MCF 10A (cell line): ENCODE measurements at regions of chr4 and their contacts with region 1.

Region 1: GRCh38 chr4:114615436-114615885 is 16.9 kb downstream of the UGT8 start:
- DNase-seq: no peak
- H3K4me3 Mint-ChIP-seq: no peak overlapping the region
- H3K27ac Mint-ChIP-seq: no peak overlapping the region
- H3K4me1 Mint-ChIP-seq: no peaks in the 10 kb centered on the region
- H3K27me3 Mint-ChIP-seq: no peaks in the 10 kb centered on the region
- CTCF ChIP-seq: no peak

Region 2: DNA sequence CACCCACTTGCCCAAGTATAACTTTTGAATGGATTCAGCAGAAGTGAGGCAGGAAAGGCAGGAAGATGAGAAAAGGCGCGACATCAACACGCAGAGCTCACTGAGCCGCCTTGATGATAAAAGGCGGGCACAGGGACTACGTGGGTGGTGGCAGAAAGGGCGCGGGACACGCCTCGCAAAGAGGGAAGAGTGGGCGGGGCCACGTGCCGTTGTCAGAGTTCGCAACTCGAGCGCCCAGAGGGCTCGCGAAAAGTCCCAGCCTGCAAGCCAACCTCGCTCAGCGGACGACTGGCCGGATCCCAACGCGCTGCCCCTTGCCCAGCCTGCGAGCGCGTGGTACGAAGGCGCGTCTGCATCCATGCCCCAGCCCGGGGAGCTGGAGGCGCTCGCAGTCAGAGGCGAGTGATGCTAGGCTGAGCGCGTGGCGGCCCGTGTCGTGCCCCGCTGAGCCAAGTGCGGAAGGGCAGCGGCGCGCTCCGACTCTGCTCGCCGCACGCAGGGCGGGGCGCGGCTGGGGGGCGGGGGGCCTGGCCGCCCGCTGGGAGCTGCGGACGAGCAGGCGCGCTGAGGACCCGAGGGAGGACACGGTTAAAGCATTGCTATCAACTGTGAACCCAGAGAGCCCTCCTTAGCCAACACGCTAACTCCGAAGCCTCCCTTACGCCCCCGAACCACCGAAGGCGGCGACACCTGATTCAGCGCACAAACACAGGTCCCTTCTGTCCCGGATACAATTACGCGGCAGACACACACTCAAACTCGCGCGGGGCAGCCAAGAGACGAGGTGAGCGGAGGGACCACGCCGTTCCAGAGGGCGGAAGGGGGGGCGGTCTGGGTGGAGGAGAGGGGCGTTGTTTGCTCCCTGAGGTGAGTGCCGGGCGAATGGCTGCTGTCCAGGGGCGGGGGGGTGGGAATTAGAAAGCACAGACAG is 17.0 kb before region 1 on chr4 and contains the start of gene UGT8:
- CTCF ChIA-PET with region 1: interaction called, 9 read pairs
- POLR2A ChIA-PET with region 1: interaction called, 13 read pairs
- intact Hi-C with region 1: no loop called
- DNase-seq: peak; percentile 84
- H3K4me3 Mint-ChIP-seq: peak within 1 kb of the TSS; percentile 77
- H3K27ac Mint-ChIP-seq: no peak within 1 kb of the TSS
- H3K4me1 Mint-ChIP-seq: peaks cover 7% of the 10 kb centered on the region
- H3K27me3 Mint-ChIP-seq: peaks cover 67% of the 10 kb centered on the region
- CTCF ChIP-seq: no peak
- total RNA-seq, gene UGT8: 2.2 and 2.6 TPM in 2 replicates

Region 3: DNA sequence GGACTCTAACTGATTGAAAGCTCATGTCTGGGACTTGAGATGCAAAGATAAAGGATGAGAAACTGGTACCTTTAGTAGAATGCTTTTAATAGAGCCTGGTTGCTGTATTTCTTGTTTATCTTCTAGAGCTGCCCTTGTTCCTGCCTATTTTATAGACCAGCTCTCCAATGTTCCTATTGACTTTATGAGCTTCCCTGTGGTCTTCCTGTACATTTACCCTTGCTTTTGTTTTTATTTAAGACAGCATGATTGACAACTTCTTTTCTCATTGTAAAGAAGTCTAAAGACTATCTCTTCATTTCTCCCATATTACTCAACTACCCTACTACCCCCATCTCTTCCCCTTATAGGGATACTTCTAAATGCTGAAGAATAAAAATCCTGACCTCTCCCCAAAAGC is 157.9 kb after region 1 on chr4:
- CTCF ChIA-PET with region 1: no interaction called
- POLR2A ChIA-PET with region 1: no interaction called
- intact Hi-C with region 1: no loop called
- DNase-seq: no peak
- H3K4me3 Mint-ChIP-seq: no peak overlapping the region
- H3K27ac Mint-ChIP-seq: no peak overlapping the region
- H3K4me1 Mint-ChIP-seq: no peaks in the 10 kb centered on the region
- H3K27me3 Mint-ChIP-seq: peaks cover 11% of the 10 kb centered on the region
- CTCF ChIP-seq: no peak